Lower leg skin (tissue), 4 donors: ENCODE measurements at regions of chr6 and their contacts with region 1.

Region 1: DNA sequence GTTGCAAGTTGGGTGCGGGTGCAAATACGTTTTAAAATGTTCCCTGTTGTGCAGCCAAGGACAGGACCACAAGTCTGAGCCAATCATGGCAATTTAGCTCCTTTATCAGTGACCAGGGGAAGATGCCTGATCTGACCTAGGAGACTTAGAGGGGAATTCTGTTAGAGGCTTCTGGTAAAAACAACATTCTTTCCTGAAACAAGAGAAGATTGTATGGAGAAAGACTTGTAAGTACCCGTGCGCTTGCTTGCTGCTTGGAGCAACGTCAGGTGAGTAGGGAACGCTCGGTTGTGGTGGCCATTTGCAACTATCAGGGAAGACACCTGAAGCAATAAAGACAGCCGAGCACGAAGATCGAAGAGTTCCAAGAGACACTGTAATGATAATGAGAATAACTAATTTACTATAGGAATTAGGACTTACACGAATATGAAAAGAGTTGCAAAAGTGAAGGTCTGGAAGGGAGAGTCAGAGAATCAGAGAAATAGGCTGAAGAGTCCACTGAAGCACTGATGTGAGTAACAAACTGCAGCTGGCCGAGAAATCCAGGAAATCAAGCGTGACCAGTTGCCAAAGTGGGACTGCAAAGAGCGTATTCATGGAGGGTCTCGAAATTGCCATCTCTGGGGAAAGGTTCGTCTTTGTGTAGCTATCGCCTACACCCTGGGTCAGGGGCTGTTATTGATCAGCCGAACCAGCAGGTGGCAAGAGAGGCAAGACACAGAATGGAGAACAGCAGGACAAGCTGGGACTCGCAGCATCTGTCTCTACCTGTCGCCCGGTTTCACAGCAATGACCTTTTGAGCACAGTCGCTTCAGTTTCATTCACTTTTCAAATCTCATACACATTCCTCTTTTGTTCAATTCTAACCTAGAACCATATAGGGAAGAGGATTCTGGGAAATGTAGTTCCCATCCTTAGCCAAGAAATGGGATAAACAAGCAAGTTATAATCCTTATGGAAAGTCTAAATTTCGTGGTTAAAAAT is 26.1 kb downstream of the LOC128125822 start:
- DNase-seq: peak; percentile 66 to 90
- H3K4me3 ChIP-seq: peak overlapping the region; percentile 1
- CTCF ChIP-seq: peak in 1 of 3 donors; percentile 80
- POLR2A ChIP-seq: no peak

Region 2: GRCh38 chr6:63347599-63347998 is 250.7 kb before region 1 on chr6:
- intact Hi-C with region 1: loop called (anchors 10 kb)
- DNase-seq: no peak
- H3K4me3 ChIP-seq: no peak overlapping the region
- CTCF ChIP-seq: no peak
- POLR2A ChIP-seq: no peak

Region 3: DNA sequence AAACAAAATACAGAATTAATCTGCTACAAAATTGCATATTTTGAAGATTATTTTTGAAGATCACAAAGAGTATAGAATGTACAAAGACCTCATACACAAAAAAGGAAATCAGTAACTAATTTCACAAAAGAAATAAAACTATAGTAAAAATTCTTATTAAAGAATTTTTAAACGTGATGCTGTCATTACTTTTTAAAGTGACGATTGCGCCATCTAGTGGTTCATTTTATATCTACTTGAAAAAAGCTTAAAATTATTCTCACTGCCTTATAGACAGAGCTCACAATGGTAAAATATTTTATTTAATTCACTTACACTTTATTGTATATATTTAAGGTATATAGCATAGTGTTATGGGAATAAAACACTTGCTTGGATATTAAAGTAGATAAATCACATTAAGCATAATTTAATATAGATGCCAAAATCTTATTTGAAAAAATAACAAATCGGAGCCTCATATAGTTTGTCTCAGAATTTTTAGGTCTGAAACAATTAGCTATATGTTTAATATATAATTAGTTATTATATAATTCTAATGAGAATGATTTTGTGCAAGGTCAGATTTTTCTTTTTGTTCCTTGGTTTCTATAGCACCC is 166.1 kb after region 1 on chr6:
- intact Hi-C with region 1: loop called (anchors 10 kb)
- DNase-seq: no peak
- H3K4me3 ChIP-seq: no peak overlapping the region
- CTCF ChIP-seq: no peak
- POLR2A ChIP-seq: no peak